Activated naive CD4-positive, alpha-beta T cell treated with anti-CD3 and anti-CD28 coated beads for 36 hours (primary cell): ENCODE measurements at regions of chr4 and their contacts with region 1.

Region 1: GRCh38 chr4:70993181-70994068 is at the start of gene DCK:
- DNase-seq: peak; percentile 83
- H3K4me3 Mint-ChIP-seq: peak within 1 kb of the TSS; percentile 96
- H3K27ac Mint-ChIP-seq: peak within 1 kb of the TSS; percentile 91
- H3K4me1 Mint-ChIP-seq: peaks cover 34% of the 10 kb centered on the region
- H3K27me3 Mint-ChIP-seq: no peaks in the 10 kb centered on the region
- total RNA-seq, gene DCK: 32.1 to 34.1 TPM

Region 2: DNA sequence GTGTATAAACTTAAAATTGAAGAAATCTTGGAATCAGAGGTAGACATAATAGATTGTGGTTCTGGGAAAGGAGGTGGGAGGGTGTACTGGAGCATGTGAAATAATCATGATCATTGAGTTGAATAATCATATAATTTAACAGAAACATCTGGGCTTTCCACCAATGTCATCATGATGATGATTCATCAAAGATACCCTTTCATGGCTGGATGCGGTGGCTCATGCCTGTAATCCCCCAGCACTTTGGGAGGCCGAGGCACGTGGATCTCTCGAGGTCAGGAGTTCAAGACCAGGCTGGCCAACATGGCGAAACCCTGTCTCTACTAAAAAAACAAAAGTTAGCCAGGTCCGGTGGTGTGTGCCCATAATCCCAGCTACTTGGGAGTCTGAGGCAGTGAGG is 278.3 kb before region 1 on chr4:
- CTCF ChIA-PET with region 1: no interaction called
- intact Hi-C with region 1: no loop called
- DNase-seq: peak; percentile 37
- H3K4me3 Mint-ChIP-seq: no peak overlapping the region
- H3K27ac Mint-ChIP-seq: peak overlapping the region; percentile 48
- H3K4me1 Mint-ChIP-seq: peaks cover 49% of the 10 kb centered on the region
- H3K27me3 Mint-ChIP-seq: no peaks in the 10 kb centered on the region

Region 3: GRCh38 chr4:70839589-70840093 is 153.8 kb before region 1 on chr4 and contains the start of gene GRSF1:
- CTCF ChIA-PET with region 1: interaction called, 4 read pairs
- intact Hi-C with region 1: loop called (anchors 1 kb)
- DNase-seq: peak; percentile 97
- H3K4me3 Mint-ChIP-seq: peak within 1 kb of the TSS; percentile 98
- H3K27ac Mint-ChIP-seq: peak within 1 kb of the TSS; percentile 97
- H3K4me1 Mint-ChIP-seq: peaks cover 34% of the 10 kb centered on the region
- H3K27me3 Mint-ChIP-seq: no peaks in the 10 kb centered on the region
- total RNA-seq, gene GRSF1: 66.7 to 75.0 TPM

Region 4: GRCh38 chr4:70927502-70928137 is 65.8 kb before region 1 on chr4:
- CTCF ChIA-PET with region 1: no interaction called
- intact Hi-C with region 1: loop called (anchors 1 kb)
- DNase-seq: peak; percentile 73
- H3K4me3 Mint-ChIP-seq: peak overlapping the region; percentile 51
- H3K27ac Mint-ChIP-seq: peak overlapping the region; percentile 66
- H3K4me1 Mint-ChIP-seq: peaks cover 28% of the 10 kb centered on the region
- H3K27me3 Mint-ChIP-seq: no peaks in the 10 kb centered on the region

Region 5: GRCh38 chr4:71009890-71010588 is 16.6 kb after region 1 on chr4:
- CTCF ChIA-PET with region 1: interaction called, 17 read pairs
- intact Hi-C with region 1: loop called (anchors 1 kb)
- DNase-seq: no peak
- H3K4me3 Mint-ChIP-seq: no peak overlapping the region
- H3K27ac Mint-ChIP-seq: no peak overlapping the region
- H3K4me1 Mint-ChIP-seq: peaks cover 34% of the 10 kb centered on the region
- H3K27me3 Mint-ChIP-seq: no peaks in the 10 kb centered on the region

Region 6: DNA sequence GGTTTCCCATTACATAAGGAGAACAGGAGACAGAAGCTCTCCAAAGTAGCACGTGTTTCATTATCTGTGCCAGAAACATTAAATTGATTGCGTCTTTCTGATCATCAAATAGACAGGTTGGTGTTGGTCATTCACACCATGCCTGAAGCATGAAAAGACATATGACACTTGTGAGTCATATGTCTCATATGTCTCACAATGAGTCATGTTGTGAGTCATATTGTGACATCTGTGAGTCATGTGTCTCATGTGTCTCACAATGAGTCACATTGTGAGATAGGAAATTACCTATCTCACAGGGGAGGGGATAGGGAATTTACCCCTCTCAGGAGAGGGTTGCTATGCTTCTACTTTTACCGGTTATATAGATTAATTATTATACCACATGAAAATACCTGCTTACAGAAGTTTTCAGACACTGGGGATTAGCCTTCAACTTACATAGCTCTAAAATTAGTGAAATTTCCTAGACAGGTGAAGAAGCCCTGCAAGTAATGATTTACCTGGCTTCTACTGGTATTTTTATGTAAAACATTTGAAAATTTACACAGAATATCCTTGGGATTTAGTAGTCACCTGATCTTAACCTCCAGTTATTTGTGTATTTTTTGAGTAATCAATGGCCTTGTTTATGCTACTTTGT is 1119.2 kb after region 1 on chr4:
- CTCF ChIA-PET with region 1: no interaction called
- intact Hi-C with region 1: loop called (anchors 5 kb)
- DNase-seq: peak; percentile 54
- H3K4me3 Mint-ChIP-seq: no peak overlapping the region
- H3K27ac Mint-ChIP-seq: no peak overlapping the region
- H3K4me1 Mint-ChIP-seq: peaks cover 7% of the 10 kb centered on the region
- H3K27me3 Mint-ChIP-seq: peaks cover 2% of the 10 kb centered on the region